ENCODE measurements at regions of chr3 and their contacts with region 1.

Region 1: DNA sequence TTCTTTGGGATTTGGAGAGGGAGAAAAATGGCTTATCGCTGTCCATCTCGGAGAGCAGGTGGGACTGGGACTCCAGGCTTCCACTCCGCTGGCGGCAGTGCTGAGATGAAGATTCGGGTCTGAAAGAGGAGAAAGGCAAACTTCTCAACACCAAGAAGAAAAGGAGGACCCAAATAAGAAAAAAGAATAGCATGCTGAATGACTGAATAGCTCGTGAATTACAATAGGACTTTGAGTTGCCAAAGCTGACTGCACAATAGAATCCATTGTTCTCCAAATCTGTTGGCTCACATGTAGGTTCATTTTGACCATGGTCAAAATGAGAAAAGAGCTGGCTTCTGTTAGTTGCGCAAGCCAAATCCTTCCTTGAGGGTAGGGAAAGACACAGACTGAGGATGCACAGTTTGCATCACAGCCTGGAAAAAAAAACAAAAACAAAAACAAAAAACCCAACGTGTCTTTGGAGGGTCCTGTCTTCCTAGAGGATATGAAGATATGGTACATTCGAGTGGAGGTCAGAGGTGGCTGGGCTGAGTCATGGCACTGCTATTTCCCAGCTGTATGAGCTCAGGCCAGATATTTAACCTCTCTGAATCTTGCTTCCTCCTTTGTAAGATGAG is 59.3 kb upstream of the LMOD3 start:
- DNase-seq: peak in 1 of 3 donors; percentile 27
- ATAC-seq: peak; percentile 59 to 76
- H3K4me3 ChIP-seq: no peak overlapping the region
- H3K27ac ChIP-seq: peak overlapping the region; percentile 30
- H3K4me1 ChIP-seq: peaks cover 4% of the 10 kb centered on the region
- H3K27me3 ChIP-seq: no peaks in the 10 kb centered on the region

Region 2: DNA sequence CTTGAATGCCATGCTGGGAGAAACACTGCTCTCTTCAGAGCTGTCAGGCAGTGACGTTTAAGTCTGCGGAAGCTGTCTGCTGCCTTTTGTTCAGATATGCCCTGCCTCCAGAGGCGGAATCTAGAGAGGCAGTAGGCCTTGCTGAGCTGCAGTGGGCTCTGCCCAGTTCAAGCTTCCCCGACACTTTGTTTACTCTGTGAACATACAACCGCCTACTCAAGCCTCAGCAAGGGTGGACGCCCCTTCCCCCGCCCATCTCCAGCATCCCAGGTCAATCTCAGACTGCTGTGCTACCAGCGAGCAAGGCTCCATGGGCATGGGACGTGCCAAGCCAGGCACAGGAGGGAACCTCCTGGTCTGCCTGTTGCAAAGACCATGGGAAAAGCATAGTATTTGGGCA is 349.0 kb before region 1 on chr3:
- intact Hi-C with region 1: no loop called
- DNase-seq: no peak
- ATAC-seq: no peak
- H3K4me3 ChIP-seq: no peak overlapping the region
- H3K27ac ChIP-seq: no peak overlapping the region
- H3K4me1 ChIP-seq: no peaks in the 10 kb centered on the region
- H3K27me3 ChIP-seq: no peaks in the 10 kb centered on the region

Region 3: DNA sequence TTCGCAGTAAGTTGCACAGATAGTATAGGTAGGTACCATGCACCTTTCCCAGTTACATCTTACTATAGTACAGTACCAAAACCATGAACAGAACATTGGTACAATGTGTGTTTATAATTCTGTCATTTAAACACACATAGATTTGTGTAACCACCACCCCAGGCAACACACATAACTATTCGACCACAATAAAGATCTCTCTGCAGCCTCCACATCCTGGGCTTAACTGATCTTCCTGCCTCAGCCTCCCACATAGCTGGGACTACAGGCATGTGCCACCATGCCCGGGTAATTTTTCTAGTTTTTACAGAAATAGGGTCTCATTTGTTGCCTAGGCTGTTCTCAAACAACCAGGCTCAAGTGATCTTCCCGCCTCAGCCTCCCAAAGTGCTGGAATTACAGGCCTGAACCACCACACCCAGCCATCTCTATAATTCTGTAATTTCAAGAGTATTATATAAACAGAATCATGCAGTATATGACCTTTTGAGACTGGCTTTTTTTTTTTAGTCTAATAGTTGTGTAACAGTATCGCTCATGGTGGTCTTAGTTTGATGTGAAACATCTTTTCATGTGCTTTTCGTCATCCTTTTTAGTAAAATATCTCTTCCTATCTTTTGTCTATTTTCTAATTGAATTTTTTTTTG is 116.3 kb before region 1 on chr3:
- intact Hi-C with region 1: no loop called
- DNase-seq: no peak
- ATAC-seq: no peak
- H3K4me3 ChIP-seq: no peak overlapping the region
- H3K27ac ChIP-seq: no peak overlapping the region
- H3K4me1 ChIP-seq: no peaks in the 10 kb centered on the region
- H3K27me3 ChIP-seq: no peaks in the 10 kb centered on the region

Region 4: GRCh38 chr3:69231929-69232440 is 50.3 kb after region 1 on chr3:
- intact Hi-C with region 1: loop called in 1 of 4 experiments (anchors 10 kb)
- DNase-seq: peak in 1 of 3 donors; percentile 27
- ATAC-seq: peak; percentile 59 to 75
- H3K4me3 ChIP-seq: no peak overlapping the region
- H3K27ac ChIP-seq: no peak overlapping the region
- H3K4me1 ChIP-seq: no peaks in the 10 kb centered on the region
- H3K27me3 ChIP-seq: no peaks in the 10 kb centered on the region

Measured in right cardiac atrium (tissue), 5 donors.